ENCODE measurements at regions of chr9 and their contacts with region 1.

Region 1: GRCh38 chr9:74205056-74205455 is 292.1 kb upstream of the RORB start:
- DNase-seq: no peak
- H3K4me3 Mint-ChIP-seq: no peak overlapping the region
- H3K27ac Mint-ChIP-seq: no peak overlapping the region
- H3K4me1 Mint-ChIP-seq: no peaks in the 10 kb centered on the region
- H3K27me3 Mint-ChIP-seq: no peaks in the 10 kb centered on the region

Region 2: GRCh38 chr9:74172874-74173273 is 32.2 kb before region 1 on chr9:
- intact Hi-C with region 1: loop called (anchors 5 kb)
- DNase-seq: no peak
- H3K4me3 Mint-ChIP-seq: no peak overlapping the region
- H3K27ac Mint-ChIP-seq: no peak overlapping the region
- H3K4me1 Mint-ChIP-seq: no peaks in the 10 kb centered on the region
- H3K27me3 Mint-ChIP-seq: no peaks in the 10 kb centered on the region